ENCODE measurements at regions of chr12 and their contacts with region 1.

Region 1: DNA sequence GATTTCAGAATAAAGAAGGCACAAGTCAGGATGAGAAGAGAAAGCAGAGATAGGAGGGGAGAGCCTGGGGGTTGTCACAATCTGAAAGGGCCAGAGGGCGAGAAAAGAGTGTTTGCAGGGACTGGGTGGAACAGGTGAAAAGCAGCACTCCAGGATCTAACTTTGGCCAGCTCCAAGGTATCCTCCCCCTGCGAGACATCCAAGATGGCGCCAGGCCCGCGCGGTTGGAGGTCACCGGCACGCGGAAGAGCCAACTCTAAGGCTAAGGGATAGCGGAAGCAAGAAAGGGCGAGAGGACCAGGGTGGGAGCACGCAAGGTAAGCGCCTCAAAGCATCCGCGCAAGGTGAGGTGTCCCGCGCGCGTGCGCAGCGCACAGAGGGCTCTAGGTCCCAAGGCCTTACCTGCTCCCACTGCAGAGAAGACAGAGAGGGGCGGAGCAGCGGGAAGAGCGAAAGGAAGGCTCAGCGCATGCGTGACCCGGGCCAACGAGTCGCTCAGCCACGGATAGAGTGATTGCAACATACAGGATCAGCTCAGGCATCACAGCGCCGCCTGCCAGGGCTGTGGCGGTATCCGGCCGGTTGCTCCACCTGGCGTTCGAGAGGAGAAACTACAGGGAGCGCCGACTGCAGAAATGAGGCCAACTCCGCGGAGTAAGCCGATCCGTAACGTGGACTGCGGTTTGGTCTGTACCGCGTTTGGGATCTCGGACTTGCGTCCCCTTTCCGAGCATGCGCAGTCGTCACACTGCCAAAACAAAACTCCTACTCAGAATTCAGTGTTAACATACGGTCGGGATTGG is at the start of gene ATP5MC2:
- DNase-seq: peak; percentile 95 to 100 (median 98)

Region 2: GRCh38 chr12:53543539-53543938 is 132.3 kb before region 1 on chr12:
- intact Hi-C with region 1: loop called (anchors 1 kb)
- DNase-seq: peak; percentile 45 to 95 (median 68)

Region 3: DNA sequence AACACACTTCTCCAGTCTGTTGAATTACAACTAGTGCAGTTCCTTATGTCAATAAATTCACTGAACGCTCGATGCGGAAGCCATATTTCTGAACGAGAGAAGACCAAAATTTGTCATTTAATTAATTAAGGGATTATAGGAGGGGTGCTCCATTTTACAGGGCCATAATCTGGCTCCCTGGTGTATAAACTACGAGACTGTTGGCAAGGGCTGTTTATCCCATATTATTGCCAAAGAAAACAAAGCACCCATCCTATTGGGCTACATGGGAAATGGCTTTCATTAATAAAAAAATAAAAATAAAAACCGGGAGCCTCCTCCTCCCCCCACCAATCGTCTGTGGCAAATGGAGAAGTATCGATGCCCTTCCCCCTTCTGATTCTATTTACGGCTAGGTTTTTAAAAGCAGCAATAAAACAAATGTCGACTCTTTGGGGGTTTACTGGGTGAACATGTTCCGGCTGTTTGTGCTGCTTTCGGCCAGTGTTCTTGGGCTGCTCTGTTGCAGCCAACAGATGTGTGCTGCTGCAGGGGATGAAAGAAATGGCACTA is 74.5 kb before region 1 on chr12:
- intact Hi-C with region 1: loop called (anchors 5 kb)
- DNase-seq: peak in 3 of 10 donors; percentile 28 to 86 (median 40)

Region 4: DNA sequence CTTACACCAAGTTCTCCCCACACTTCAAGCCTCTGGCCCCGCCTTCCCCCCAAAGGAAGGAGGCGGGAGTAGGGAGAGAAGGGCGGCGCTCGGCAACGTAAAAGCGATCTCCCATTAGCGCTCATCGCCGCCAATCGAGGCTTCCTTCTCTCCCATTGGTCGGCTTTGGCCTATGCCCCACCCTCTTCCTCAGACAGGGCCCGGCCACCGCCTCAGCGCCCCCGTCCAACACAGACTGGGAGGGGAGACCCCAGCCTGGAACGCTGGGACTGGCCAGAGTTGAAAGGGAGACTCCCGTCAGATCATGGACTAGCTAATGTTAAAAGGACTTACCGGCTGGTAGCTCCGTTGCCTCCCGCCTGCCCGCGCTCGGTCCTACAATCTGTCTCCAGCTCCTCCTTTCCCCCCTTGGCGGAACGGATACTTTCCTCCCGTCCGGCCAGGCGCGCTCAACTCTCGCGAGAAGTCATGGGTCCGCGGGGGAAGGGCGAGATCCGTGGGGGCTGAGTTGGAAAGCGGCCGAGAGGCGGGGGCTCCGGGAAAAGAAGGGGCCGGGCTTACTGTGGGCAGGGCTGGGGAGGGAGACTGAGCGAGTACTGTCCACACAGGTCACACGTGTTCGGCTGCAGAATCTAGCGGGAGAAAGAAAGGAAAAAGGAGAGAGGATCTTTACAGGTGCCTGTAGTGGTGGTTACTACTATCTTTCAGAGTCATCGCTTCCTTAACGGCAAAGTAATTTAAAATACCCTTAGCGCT is 49.7 kb before region 1 on chr12 and contains the start of gene ATF7:
- intact Hi-C with region 1: loop called (anchors 1 kb)
- DNase-seq: peak; percentile 97 to 100 (median 98)

Region 5: GRCh38 chr12:53828598-53828997 is 152.7 kb after region 1 on chr12:
- intact Hi-C with region 1: no loop called
- DNase-seq: no peak

Measured in posterior cingulate gyrus (tissue), 11 donors.